ENCODE measurements at regions of chr11 and their contacts with region 1.

Region 1: GRCh38 chr11:33542921-33543320 is 157.7 kb downstream of the C11orf91 start:
- DNase-seq: peak; percentile 34 to 82
- H3K4me3 ChIP-seq: no peak overlapping the region
- H3K27ac ChIP-seq: no peak overlapping the region
- H3K4me1 ChIP-seq: no peaks in the 10 kb centered on the region
- H3K27me3 ChIP-seq: no peaks in the 10 kb centered on the region
- CTCF ChIP-seq: peak; percentile 83 to 89 (median 85)
- EP300 ChIP-seq: no peak
- POLR2A ChIP-seq: no peak
- RAD21 ChIP-seq: peak; percentile 70 to 83

Region 2: DNA sequence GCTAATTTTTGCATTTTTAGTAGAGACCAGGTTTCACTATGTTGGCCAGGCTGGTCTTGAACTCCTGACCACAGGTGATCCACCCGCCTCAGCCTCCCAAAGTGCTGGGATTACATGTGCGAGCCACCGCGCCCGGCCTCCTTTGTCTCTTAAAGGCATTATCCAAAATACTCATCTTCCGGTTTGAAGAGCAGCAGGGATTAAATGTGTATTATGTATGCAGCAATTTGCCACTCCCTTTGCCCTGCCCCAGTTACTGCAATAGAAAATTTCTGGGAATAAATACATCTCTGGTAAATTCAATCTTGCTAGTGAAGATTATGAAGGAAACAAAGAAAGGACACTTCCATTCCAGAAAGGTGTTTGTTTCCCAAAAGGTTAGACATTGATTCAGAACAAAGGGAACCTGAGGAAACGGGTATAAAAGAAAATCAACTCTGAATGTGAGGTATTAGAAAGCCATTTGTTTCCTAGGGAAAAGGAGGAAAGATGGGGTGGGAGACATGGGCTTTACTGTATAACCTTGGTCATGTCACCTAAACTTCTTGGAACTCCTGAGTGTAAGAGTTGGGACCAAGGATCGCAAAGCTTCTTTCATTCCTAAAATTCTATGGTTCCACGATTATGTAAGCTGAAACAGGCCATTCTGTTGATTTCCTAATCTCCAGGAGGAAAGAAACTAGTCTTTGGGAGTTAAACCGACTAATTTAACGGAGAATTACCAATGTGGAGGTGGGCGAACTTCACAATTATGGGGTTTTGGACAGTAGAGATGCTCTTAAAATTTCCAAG is 286.7 kb before region 1 on chr11:
- CTCF ChIA-PET with region 1: no interaction called
- POLR2A ChIA-PET with region 1: no interaction called
- DNase-seq: no peak
- H3K4me3 ChIP-seq: peak overlapping the region; percentile 68 to 85 (median 82)
- H3K27ac ChIP-seq: 0 out of 2 replicates have a peak overlapping the region, but pooled peaks have one; percentile 36
- H3K4me1 ChIP-seq: peaks cover 0 to 2% (median under 1%) of the 10 kb centered on the region in 4 experiments; a peak in 1 of 7 replicates
- H3K27me3 ChIP-seq: no peaks in the 10 kb centered on the region
- CTCF ChIP-seq: no peak
- EP300 ChIP-seq: no peak
- POLR2A ChIP-seq: no peak
- RAD21 ChIP-seq: no peak

Region 3: DNA sequence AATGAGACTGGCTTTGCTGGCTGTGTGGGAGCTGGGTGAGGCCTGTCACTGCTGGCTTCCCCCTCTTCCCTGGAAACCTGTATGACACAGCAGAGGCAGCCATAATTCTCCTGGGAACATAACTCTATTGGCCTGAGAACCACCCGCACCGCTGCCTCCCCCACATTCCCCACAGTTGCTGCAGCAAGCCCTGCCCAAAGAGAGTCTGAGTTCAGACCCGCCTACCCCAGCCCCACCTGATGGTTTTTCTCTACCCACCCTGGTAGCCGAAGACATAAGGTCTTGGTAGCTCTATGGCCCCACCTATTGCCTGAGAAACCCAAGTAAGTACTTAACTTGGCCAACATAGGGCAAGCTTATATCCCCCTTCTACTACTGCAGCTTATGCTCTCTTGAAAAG is 17.1 kb before region 1 on chr11:
- CTCF ChIA-PET with region 1: interaction called, 10 read pairs
- POLR2A ChIA-PET with region 1: no interaction called
- DNase-seq: peak; percentile 3 to 48
- H3K4me3 ChIP-seq: no peak overlapping the region
- H3K27ac ChIP-seq: no peak overlapping the region
- H3K4me1 ChIP-seq: peaks cover 0 to 4% (median 2%) of the 10 kb centered on the region in 4 experiments; a peak in 2 of 7 replicates
- H3K27me3 ChIP-seq: no peaks in the 10 kb centered on the region
- CTCF ChIP-seq: peak in 2 of 3 experiments; percentile 24 to 31; a peak in 3 of 4 replicates
- EP300 ChIP-seq: no peak
- POLR2A ChIP-seq: no peak
- RAD21 ChIP-seq: peak; percentile 49 to 66

Region 4: GRCh38 chr11:33553486-33553885 is 10.6 kb after region 1 on chr11:
- CTCF ChIA-PET with region 1: interaction called, 13 read pairs
- POLR2A ChIA-PET with region 1: no interaction called
- DNase-seq: no peak
- H3K4me3 ChIP-seq: no peak overlapping the region
- H3K27ac ChIP-seq: no peak overlapping the region
- H3K4me1 ChIP-seq: peaks cover 0 to 4% (median 0%) of the 10 kb centered on the region in 4 experiments; a peak in 1 of 7 replicates
- H3K27me3 ChIP-seq: no peaks in the 10 kb centered on the region
- CTCF ChIP-seq: no peak
- EP300 ChIP-seq: no peak
- POLR2A ChIP-seq: no peak
- RAD21 ChIP-seq: no peak

Region 5: GRCh38 chr11:33687733-33688479 is 145.0 kb after region 1 on chr11:
- CTCF ChIA-PET with region 1: interaction called, 167 read pairs
- POLR2A ChIA-PET with region 1: no interaction called
- DNase-seq: peak in 1 of 2 experiments; percentile 72
- H3K4me3 ChIP-seq: no peak overlapping the region
- H3K27ac ChIP-seq: no peak overlapping the region
- H3K4me1 ChIP-seq: peaks cover 2 to 20% (median 10%) of the 10 kb centered on the region in 4 experiments
- H3K27me3 ChIP-seq: no peaks in the 10 kb centered on the region
- CTCF ChIP-seq: peak in 2 of 3 experiments; percentile 80; a peak in 3 of 4 replicates
- EP300 ChIP-seq: no peak
- POLR2A ChIP-seq: no peak
- RAD21 ChIP-seq: peak; percentile 99